ENCODE measurements at regions of chr3 and their contacts with region 1.

Region 1: DNA sequence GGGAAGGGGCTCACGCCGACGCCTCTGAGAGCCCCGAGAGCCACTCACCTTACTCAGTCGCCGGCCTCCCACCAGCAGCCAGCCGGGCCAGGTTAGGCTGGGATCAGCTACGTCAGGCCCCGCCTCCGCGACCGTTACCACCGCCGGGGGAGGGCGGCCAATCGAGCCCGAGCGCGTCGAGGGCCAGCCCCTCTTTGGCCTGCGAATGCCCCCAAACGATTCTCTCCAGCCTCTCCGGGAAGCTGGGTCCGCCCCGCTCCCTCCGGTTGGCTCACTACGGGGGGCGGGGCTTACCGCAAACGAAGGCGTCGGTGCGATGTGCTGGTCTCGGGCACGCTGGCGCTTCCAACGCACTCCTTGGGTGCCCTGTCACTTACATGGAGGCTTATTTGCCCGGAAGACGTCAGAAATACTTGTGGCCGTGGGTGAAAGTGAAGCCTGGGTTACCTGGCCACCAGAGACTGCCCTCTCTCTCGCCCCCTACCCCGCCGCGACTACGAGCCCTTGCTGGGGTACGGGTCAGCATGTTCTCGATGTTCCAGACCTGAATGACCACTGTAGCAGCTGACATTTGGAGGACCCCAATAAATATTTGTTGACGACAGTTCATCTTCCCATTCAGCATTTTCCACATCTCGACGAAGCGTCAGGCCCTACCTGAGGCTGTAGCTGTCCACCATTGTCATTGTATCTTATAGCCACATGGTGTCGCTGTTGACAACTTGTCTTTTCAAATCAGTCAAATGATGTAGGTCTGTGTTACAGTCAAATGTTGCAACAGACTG is at the start of gene CEP70:
- DNase-seq: peak; percentile 89 to 97
- H3K4me3 ChIP-seq: peak within 1 kb of the TSS; percentile 80
- H3K27ac ChIP-seq: peak within 1 kb of the TSS; percentile 84
- H3K4me1 ChIP-seq: peaks cover 14% of the 10 kb centered on the region
- H3K27me3 ChIP-seq: no peaks in the 10 kb centered on the region
- CTCF ChIP-seq: peak; percentile 93
- total RNA-seq, gene CEP70: 50.5 and 73.6 TPM in 2 replicates

Region 2: DNA sequence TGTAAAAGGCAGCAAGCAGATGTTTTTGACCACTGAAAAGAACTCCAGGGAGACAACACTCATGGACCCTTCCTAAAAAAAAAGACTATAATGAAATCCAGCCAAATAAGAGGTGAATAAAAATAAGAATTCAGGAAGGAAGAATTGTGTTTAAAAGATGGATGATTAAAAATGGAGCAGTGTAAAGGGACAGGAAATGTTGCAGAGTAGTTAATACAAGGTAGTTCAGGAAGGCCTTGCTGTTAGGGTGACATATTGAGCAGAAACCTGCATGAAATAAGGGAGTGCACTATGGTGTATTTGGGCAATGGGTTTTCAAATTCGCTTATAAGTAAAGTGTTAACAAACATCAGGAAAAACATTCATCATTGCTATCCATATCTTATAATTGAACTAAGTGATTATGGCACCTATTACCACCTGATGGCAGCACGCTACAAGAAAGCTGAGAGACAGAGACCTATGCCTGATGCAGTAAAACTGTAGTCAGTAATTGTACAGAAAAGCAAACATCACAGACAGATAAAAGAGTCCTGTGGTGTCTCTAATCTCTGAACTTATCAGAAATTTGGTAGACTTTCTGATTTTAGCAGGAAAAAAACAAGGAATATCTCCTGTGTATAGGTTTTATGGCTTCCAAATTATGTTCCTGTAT is 413.8 kb before region 1 on chr3:
- CTCF ChIA-PET with region 1: no interaction called
- POLR2A ChIA-PET with region 1: no interaction called
- intact Hi-C with region 1: loop called (anchors 2 kb)
- DNase-seq: no peak
- H3K4me3 ChIP-seq: no peak overlapping the region
- H3K27ac ChIP-seq: no peak overlapping the region
- H3K4me1 ChIP-seq: peaks cover 7% of the 10 kb centered on the region; the same call in 1 of the 2 replicates
- H3K27me3 ChIP-seq: no peaks in the 10 kb centered on the region
- CTCF ChIP-seq: peak; percentile 62

Region 3: GRCh38 chr3:138417559-138417982 is 176.8 kb before region 1 on chr3:
- CTCF ChIA-PET with region 1: interaction called, 4 read pairs
- POLR2A ChIA-PET with region 1: no interaction called
- intact Hi-C with region 1: loop called (anchors 2 kb)
- DNase-seq: peak; percentile 54 to 83
- H3K4me3 ChIP-seq: no peak overlapping the region
- H3K27ac ChIP-seq: no peak overlapping the region
- H3K4me1 ChIP-seq: no peaks in the 10 kb centered on the region
- H3K27me3 ChIP-seq: no peaks in the 10 kb centered on the region
- CTCF ChIP-seq: peak; percentile 88

Region 4: GRCh38 chr3:138493804-138494606 is 100.3 kb before region 1 on chr3:
- CTCF ChIA-PET with region 1: no interaction called
- POLR2A ChIA-PET with region 1: no interaction called
- intact Hi-C with region 1: no loop called
- DNase-seq: no peak
- H3K4me3 ChIP-seq: no peak overlapping the region
- H3K27ac ChIP-seq: 0 out of 2 replicates have a peak overlapping the region, but pooled peaks have one; percentile 14
- H3K4me1 ChIP-seq: 0 out of 2 replicates have a peak, but pooled peaks cover 4% of the 10 kb centered on the region
- H3K27me3 ChIP-seq: no peaks in the 10 kb centered on the region
- CTCF ChIP-seq: no peak

Region 5: DNA sequence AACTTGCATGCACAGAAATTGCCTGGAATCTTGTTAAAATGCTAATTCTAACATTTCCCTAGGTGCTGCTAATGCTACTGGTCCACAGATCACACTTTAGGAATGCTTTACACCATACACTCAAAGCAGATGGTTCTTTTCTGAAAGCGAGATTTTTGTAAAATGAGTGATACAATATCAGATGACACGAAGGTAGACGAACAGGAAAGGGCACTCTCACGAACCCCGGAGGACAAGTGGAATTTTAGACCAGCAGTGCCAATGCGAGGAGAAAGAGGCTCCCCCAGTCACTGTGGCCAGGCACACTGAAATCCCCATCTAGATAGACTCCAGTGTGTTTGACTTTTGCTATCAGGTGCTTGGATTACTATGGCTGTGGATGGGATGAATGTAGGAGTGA is 35.2 kb after region 1 on chr3:
- CTCF ChIA-PET with region 1: interaction called, 8 read pairs
- POLR2A ChIA-PET with region 1: interaction called, 5 read pairs
- intact Hi-C with region 1: loop called (anchors 1 kb)
- DNase-seq: peak in 1 of 2 experiments; percentile 53
- H3K4me3 ChIP-seq: no peak overlapping the region
- H3K27ac ChIP-seq: no peak overlapping the region
- H3K4me1 ChIP-seq: no peaks in the 10 kb centered on the region
- H3K27me3 ChIP-seq: no peaks in the 10 kb centered on the region
- CTCF ChIP-seq: no peak

Region 6: DNA sequence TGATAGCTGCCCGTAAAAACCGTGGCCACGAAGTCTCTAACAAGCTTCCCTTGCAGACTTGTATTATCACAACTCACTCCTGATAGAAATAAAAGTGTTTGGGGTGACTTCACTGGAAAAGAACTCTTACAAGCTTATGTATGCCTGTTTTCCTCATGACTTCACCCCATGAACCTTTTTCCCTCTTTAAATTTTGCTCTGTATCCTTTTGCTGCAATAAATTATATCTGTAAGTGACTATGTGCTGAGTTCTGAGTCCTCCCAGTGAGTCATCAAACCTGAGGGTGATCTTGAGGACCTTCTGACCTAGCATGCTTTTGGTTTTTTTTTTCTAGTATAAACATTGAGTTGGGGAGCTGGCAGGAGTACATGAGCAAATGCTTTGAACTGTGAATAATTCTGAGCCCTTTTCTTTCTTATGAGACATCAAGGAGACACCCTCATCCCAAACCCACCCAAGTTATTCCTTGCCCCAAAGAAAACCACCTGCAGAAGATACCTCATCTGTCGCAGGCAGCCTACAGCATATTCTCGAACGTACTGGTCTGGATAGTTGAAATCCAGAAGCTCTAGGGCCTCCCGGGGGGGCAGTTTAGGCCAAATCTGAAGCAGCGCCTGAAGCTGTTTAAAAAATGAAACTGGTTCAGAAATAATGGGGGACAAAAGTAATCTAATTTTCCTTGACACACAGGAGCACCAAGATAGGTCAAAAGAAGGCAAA is 100.1 kb after region 1 on chr3:
- CTCF ChIA-PET with region 1: interaction called, 8 read pairs
- POLR2A ChIA-PET with region 1: interaction called, 12 read pairs
- intact Hi-C with region 1: loop called (anchors 1 kb)
- DNase-seq: peak; percentile 52 to 94
- H3K4me3 ChIP-seq: no peak overlapping the region
- H3K27ac ChIP-seq: peak overlapping the region; percentile 71
- H3K4me1 ChIP-seq: peaks cover 26% of the 10 kb centered on the region
- H3K27me3 ChIP-seq: no peaks in the 10 kb centered on the region
- CTCF ChIP-seq: no peak

Region 7: DNA sequence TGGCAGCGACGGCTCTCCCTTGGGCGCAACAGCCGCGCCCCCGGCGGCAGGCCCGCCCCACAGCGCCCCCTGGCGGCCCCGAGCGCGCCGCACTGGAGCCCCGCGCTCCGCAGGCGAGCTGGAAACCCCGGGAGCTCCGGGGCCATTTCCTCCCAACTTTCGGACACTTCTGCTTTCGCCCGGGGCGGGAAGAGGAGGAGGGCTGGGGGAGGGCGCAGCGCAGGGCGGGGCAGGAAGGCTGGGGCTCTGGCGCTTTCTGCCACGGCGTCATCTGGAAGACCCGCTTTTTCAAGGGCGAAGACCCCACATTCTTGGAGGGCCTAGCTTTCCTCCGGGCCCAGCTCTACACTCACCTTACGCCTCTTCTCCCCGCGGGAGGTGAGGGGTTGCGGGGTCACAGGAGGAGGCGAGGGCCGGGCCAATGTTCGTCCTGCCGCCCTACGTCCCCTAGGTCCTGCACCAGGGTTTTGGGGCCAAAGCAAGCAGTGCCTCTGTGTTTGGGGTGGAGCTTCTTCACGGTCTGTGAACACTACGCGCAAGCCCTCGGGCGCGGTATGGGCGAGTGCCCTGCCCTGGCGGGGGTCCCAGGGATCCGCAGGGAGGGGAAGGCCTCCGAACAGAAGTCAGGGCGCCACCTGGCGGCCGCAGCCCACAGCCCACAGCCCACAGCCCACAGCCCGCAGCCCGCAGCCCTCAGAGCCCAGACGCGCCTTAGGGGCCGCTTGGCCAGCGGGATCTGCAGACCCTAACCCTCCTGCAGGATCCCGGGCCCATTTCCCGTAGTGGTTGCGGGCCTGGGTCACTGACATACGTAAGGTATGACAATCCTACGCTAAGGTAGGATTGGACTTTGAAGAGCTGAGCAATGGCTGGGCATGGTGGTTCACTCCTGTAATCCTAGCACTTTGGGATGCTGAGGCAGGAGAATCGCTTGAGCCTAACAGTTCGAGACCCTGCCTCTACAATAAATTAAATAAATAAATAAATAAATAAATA is 321.5 kb after region 1 on chr3:
- CTCF ChIA-PET with region 1: interaction called, 39 read pairs
- POLR2A ChIA-PET with region 1: interaction called, 10 read pairs
- intact Hi-C with region 1: loop called (anchors 1 kb)
- DNase-seq: peak; percentile 83 to 97
- H3K4me3 ChIP-seq: peak overlapping the region; percentile 75
- H3K27ac ChIP-seq: peak overlapping the region; percentile 88
- H3K4me1 ChIP-seq: peaks cover 52% of the 10 kb centered on the region
- H3K27me3 ChIP-seq: no peaks in the 10 kb centered on the region
- CTCF ChIP-seq: peak; percentile 82

Region 8: DNA sequence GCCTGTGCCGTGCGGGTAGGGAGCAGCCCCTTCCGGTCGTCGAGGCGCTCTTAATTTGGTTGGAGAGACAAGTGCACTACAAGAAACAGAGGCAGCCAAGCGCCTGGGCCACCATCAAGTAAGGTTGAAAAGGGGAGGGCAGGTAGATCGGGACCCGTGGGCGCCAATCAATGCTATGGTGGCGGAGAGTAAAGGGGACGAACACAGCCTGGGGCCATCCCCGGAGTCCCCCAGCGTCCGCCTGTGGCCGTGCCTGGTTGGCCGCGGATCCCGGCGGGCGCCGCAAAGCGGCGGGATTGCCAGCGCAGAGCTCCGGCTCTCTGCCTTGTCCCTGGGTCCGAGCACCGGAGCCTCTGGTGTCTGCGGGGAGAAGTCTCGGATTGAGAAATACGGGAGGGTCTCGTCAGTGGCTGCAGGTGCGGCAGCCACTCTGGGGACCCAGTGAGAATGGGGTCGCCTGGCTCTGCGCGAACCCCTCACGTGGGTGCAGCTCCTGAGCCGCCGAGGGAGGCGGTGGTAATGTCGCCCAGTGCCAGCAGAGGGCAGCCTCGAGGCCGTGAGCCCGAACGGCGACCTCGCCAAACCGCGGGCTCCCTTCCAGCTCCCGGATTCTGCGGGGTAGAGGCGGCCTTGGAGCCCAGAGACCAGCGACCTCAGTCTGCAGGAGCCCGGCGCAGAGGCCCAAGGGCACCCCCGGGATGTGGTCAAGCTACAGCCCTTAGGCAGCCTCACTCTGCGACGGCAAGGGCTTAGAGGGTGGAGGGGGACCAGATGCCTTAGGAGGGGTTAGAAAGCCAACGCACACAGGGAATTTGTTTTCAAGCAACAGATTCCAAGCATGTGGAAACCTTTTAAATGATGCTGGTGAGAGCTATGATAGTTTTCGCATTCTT is 341.8 kb after region 1 on chr3:
- CTCF ChIA-PET with region 1: interaction called, 11 read pairs
- POLR2A ChIA-PET with region 1: no interaction called
- intact Hi-C with region 1: loop called (anchors 1 kb)
- DNase-seq: peak in 1 of 2 experiments; percentile 81
- H3K4me3 ChIP-seq: peak overlapping the region; percentile 76
- H3K27ac ChIP-seq: no peak overlapping the region
- H3K4me1 ChIP-seq: 0 out of 2 replicates have a peak, but pooled peaks cover 6% of the 10 kb centered on the region
- H3K27me3 ChIP-seq: no peaks in the 10 kb centered on the region
- CTCF ChIP-seq: peak; percentile 88

Region 9: DNA sequence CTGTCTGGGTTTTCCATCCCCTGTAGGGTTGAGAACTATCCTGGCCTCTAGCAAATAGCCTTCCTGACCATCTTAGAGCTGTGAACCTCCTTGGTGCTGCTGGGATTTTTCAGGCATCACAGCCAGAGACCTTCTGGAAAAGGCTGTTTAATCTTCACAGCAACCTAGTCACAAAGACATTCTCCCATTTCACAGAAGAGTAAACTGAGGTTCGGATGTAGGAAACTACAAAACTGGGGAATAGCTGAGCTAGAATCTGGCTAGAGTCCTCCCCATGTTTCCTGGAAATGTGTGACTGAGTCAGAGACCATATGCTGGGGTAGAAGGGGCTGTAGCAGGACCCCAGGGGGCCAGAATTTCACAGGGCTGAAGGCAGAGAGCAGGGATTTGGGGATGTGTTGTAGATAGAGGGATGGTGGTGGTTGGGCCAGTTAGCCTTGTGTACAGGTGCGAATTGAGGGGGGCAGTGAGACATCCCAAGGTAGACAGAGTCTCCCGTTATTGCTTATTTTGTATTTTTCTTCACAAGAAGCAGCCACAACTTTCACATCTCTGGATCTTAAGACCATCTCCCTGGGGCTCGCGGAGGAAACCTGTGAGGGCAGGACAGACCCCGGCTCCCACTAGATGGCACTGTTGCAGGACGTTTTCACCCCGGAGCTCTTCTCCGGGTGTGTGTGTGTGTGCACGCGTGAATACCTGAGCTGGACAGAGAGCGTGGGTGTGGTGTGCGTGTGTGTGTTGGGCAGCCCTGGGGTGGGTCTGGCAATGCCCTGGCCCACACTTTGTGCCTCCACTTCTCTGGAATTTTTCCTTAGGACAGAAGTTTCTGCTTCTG is 517.3 kb after region 1 on chr3:
- CTCF ChIA-PET with region 1: no interaction called
- POLR2A ChIA-PET with region 1: no interaction called
- intact Hi-C with region 1: no loop called
- DNase-seq: peak in 1 of 2 experiments; percentile 67
- H3K4me3 ChIP-seq: no peak overlapping the region
- H3K27ac ChIP-seq: no peak overlapping the region
- H3K4me1 ChIP-seq: no peaks in the 10 kb centered on the region
- H3K27me3 ChIP-seq: 0 out of 2 replicates have a peak, but pooled peaks cover 6% of the 10 kb centered on the region
- CTCF ChIP-seq: peak; percentile 77

Measured in PC-9 (cell line).